ENCODE measurements at regions of chr9 and their contacts with region 1.

Region 1: GRCh38 chr9:121285835-121286687 is 18.1 kb downstream of the GSN start:
- DNase-seq: peak; percentile 68 to 85
- ATAC-seq: peak; percentile 75 to 80 (median 80)
- H3K4me3 ChIP-seq: peak overlapping the region; percentile 57
- H3K27ac ChIP-seq: peak overlapping the region; percentile 96
- H3K4me1 ChIP-seq: peaks cover 82% of the 10 kb centered on the region
- H3K27me3 ChIP-seq: no peaks in the 10 kb centered on the region
- CTCF ChIP-seq: no peak

Region 2: GRCh38 chr9:121267689-121268597 is 18.1 kb before region 1 on chr9 and contains the start of gene GSN:
- intact Hi-C with region 1: loop called in 1 of 2 experiments (anchors 2 kb)
- DNase-seq: peak; percentile 85 to 89
- ATAC-seq: peak; percentile 81 to 92 (median 87)
- H3K4me3 ChIP-seq: peak within 1 kb of the TSS; percentile 86
- H3K27ac ChIP-seq: peak within 1 kb of the TSS; percentile 73
- H3K4me1 ChIP-seq: peaks cover 48% of the 10 kb centered on the region
- H3K27me3 ChIP-seq: no peaks in the 10 kb centered on the region
- CTCF ChIP-seq: no peak
- total RNA-seq, gene GSN: 140 to 490 (median 211) TPM